Activated CD8-positive, alpha-beta T cell treated with anti-CD3 and anti-CD28 coated beads for 36 hours (primary cell): ENCODE measurements at regions of chr4 and their contacts with region 1.

Region 1: DNA sequence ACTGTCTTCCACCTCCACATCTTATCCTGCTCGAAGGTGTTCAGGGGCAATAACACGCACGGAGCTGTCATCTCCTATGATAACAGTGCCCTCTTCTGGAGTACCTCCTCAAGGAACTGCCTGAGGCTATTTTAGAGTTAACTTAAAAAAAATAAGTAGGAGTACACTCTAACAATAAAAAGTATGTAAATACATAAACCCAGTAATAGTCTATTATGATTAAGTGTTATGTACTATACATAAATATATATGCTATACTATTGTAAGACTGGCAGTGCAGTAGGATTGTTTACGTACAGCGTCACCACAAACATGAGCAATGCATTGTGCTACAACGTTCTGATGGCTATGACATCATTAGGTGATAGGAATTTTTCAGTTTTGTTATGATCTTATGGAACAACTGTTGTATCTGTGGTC is 34.5 kb upstream of the TLR2 start:
- DNase-seq: peak; percentile 28
- ATAC-seq: no peak
- H3K4me3 Mint-ChIP-seq: no peak overlapping the region
- H3K27ac Mint-ChIP-seq: no peak overlapping the region
- H3K4me1 Mint-ChIP-seq: peaks cover 26% of the 10 kb centered on the region
- H3K27me3 Mint-ChIP-seq: no peaks in the 10 kb centered on the region
- CTCF ChIP-seq: peak; percentile 47

Region 2: DNA sequence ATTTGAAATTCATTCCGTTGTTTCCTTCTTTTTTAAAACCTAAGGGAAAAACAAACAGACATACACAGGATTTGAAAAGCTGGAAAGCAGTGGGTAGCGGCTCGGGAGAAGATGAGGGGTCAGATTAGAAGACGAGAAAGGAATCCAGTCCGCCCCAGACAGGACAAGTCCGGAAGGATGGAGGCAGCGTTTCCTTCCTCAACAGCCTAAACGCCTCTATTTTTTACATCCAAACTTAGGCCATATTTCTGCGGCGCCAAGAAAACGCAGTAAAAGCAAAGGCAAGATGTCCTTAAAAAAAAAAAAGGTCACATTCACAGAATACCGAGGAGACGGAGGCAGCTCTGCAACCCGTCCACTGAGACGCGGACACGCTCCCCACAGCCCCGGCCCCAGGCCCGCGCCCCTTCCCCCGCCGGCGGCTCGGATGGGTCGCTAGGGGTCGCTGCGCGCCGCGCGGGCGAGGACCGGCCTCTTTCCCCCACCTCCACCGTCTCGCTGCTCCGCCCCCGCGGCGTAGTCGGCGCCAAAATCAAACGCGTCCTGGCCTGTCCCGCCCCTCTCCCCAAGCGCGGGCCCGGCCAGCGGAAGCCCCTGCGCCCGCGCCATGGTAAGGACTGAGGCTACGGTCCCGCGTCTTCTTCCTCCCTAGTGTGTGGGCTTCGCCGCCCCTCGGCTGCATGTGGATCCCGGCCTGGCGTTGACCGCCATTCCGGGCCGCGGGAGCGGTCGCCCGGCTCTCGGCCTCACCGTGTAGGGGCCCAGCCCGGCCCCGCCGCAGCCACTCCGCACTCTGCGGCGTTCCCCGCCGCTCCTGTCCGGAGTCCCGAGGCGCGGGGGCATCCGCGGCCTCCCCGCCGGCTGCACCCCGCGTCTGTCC is 305.2 kb before region 1 on chr4 and contains the start of gene MND1:
- CTCF ChIA-PET with region 1: interaction called, 51 read pairs
- POLR2A ChIA-PET with region 1: no interaction called
- intact Hi-C with region 1: no loop called
- DNase-seq: peak; percentile 94
- ATAC-seq: peak; percentile 94
- H3K4me3 Mint-ChIP-seq: peak within 1 kb of the TSS; percentile 93
- H3K27ac Mint-ChIP-seq: peak within 1 kb of the TSS; percentile 87
- H3K4me1 Mint-ChIP-seq: peaks cover 24% of the 10 kb centered on the region
- H3K27me3 Mint-ChIP-seq: peaks cover 12% of the 10 kb centered on the region
- CTCF ChIP-seq: peak; percentile 100
- total RNA-seq, gene MND1: 48.0 to 50.0 TPM

Region 3: GRCh38 chr4:153573881-153574802 is 75.4 kb before region 1 on chr4:
- CTCF ChIA-PET with region 1: no interaction called
- POLR2A ChIA-PET with region 1: no interaction called
- intact Hi-C with region 1: no loop called
- DNase-seq: peak; percentile 80
- ATAC-seq: peak; percentile 81
- H3K4me3 Mint-ChIP-seq: no peak overlapping the region
- H3K27ac Mint-ChIP-seq: peak overlapping the region; percentile 80
- H3K4me1 Mint-ChIP-seq: peaks cover 72% of the 10 kb centered on the region
- H3K27me3 Mint-ChIP-seq: no peaks in the 10 kb centered on the region
- CTCF ChIP-seq: peak; percentile 66

Region 4: GRCh38 chr4:153634738-153635353 is 14.7 kb before region 1 on chr4:
- CTCF ChIA-PET with region 1: interaction called, 34 read pairs
- POLR2A ChIA-PET with region 1: interaction called, 6 read pairs
- intact Hi-C with region 1: no loop called
- DNase-seq: no peak
- ATAC-seq: no peak
- H3K4me3 Mint-ChIP-seq: no peak overlapping the region
- H3K27ac Mint-ChIP-seq: peak overlapping the region; percentile 42
- H3K4me1 Mint-ChIP-seq: no peaks in the 10 kb centered on the region
- H3K27me3 Mint-ChIP-seq: no peaks in the 10 kb centered on the region
- CTCF ChIP-seq: peak; percentile 76

Region 5: DNA sequence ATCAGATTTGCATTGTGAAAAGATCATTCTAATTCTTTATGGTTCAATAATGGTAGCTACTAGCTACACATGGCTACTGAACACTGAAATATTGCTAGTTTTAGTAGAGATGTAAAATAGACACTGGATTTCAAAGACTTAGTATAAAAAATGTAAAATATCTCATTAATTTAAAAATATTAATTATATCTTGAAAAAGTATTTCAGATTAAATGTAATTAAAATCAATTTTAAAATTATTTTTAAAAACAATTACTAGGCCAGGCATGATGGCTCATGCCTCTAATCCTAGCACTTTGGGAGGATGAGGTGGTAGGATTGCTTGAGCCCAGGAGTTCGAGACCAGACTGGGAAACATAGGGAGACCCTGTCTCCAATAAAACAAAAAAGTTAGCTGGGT is 14.1 kb after region 1 on chr4:
- CTCF ChIA-PET with region 1: no interaction called
- POLR2A ChIA-PET with region 1: no interaction called
- intact Hi-C with region 1: no loop called
- DNase-seq: no peak
- ATAC-seq: no peak
- H3K4me3 Mint-ChIP-seq: no peak overlapping the region
- H3K27ac Mint-ChIP-seq: no peak overlapping the region
- H3K4me1 Mint-ChIP-seq: no peaks in the 10 kb centered on the region
- H3K27me3 Mint-ChIP-seq: peaks cover 4% of the 10 kb centered on the region
- CTCF ChIP-seq: no peak

Region 6: GRCh38 chr4:153759407-153760316 is 110.1 kb after region 1 on chr4 and contains the start of gene RNF175:
- CTCF ChIA-PET with region 1: interaction called, 6 read pairs
- POLR2A ChIA-PET with region 1: no interaction called
- intact Hi-C with region 1: loop called (anchors 2 kb)
- DNase-seq: peak; percentile 7
- ATAC-seq: peak; percentile 47
- H3K4me3 Mint-ChIP-seq: peak within 1 kb of the TSS; percentile 10
- H3K27ac Mint-ChIP-seq: no peak within 1 kb of the TSS
- H3K4me1 Mint-ChIP-seq: peaks cover 12% of the 10 kb centered on the region
- H3K27me3 Mint-ChIP-seq: peaks cover 27% of the 10 kb centered on the region
- CTCF ChIP-seq: no peak
- total RNA-seq, gene RNF175: not detected

Region 7: GRCh38 chr4:154030746-154031145 is 381.2 kb after region 1 on chr4:
- CTCF ChIA-PET with region 1: no interaction called
- POLR2A ChIA-PET with region 1: no interaction called
- intact Hi-C with region 1: no loop called
- DNase-seq: no peak
- ATAC-seq: no peak
- H3K4me3 Mint-ChIP-seq: no peak overlapping the region
- H3K27ac Mint-ChIP-seq: no peak overlapping the region
- H3K4me1 Mint-ChIP-seq: no peaks in the 10 kb centered on the region
- H3K27me3 Mint-ChIP-seq: peaks cover 11% of the 10 kb centered on the region
- CTCF ChIP-seq: no peak